Mammary epithelial cell (primary cell): ENCODE measurements at regions of chr17 and their contacts with region 1.

Region 1: GRCh38 chr17:45092932-45093430 is 31.9 kb downstream of the NMT1 start:
- DNase-seq: peak; percentile 92
- H3K4me3 ChIP-seq: no peak overlapping the region
- H3K27ac ChIP-seq: peak overlapping the region; percentile 47
- H3K4me1 ChIP-seq: peaks cover 19% of the 10 kb centered on the region
- H3K27me3 ChIP-seq: no peaks in the 10 kb centered on the region
- CTCF ChIP-seq: no peak

Region 2: DNA sequence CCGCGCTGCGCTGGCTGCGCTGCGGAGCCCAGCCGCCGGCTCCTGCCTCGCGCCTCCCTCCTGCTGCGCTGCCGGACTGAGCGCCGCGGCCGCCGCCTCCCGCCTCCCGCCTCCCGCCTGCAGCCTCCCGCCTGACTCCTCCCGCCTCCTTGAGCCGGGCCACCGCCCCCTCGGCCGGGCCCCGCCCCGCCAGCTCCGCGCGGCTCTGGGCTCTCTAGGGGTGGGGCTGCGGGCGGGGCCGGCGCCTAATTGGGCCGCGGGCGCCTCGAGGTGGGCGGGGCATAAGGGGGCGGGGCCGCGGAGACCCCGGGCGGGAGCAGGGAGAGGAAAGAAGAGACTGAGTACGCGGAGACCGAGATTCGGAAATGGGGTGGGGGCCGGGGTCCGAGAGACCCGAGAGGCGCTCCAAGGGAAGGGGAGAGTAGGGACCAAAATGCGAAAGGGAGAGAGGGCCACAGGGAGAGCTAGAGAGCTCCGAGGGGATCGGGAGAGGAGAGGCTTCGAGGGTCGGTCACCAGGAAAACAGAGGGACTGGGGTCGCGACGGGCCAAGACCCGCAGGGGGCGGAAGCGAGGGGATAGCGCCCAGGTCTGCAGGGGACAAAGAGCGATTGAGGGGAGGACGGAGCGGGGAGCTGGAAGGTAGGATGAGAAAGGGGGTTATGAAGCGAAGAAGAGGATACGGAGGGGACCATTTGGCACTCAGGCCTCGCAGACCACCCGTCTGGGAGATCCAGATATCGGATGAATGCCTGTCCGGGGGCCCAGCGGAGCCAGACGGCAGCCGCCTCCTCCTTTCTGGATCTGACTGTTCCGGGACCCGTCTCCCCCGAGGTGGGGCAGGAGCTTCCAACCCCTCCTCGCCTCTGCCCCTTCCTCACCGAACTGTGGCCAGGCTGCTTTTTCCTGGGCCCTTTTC is 124.5 kb before region 1 on chr17 and contains the start of gene C1QL1:
- CTCF ChIA-PET with region 1: no interaction called
- dilution Hi-C with region 1: no loop called
- in situ Hi-C with region 1: no loop called
- intact Hi-C with region 1: no loop called
- DNase-seq: peak; percentile 87
- H3K4me3 ChIP-seq: peak within 1 kb of the TSS; percentile 45 to 61 (median 49)
- H3K27ac ChIP-seq: no peak within 1 kb of the TSS
- H3K4me1 ChIP-seq: peaks cover 44% of the 10 kb centered on the region
- H3K27me3 ChIP-seq: peaks cover 14% of the 10 kb centered on the region
- CTCF ChIP-seq: peak in 1 of 2 donors; percentile 18
- total RNA-seq, gene C1QL1: 0.54 TPM in 1 of 2 donors, not detected in the other

Region 3: GRCh38 chr17:45060797-45061605 is 32.0 kb before region 1 on chr17 and contains the start of gene NMT1:
- CTCF ChIA-PET with region 1: no interaction called
- dilution Hi-C with region 1: no loop called
- in situ Hi-C with region 1: no loop called
- intact Hi-C with region 1: loop called (anchors 2 kb)
- DNase-seq: peak; percentile 99
- H3K4me3 ChIP-seq: peak within 1 kb of the TSS; percentile 84 to 100 (median 92)
- H3K27ac ChIP-seq: peak within 1 kb of the TSS; percentile 94
- H3K4me1 ChIP-seq: peaks cover 13% of the 10 kb centered on the region
- H3K27me3 ChIP-seq: no peaks in the 10 kb centered on the region
- CTCF ChIP-seq: no peak
- total RNA-seq, gene NMT1: 80.0 to 143 TPM

Region 4: GRCh38 chr17:45172454-45173286 is 79.7 kb after region 1 on chr17:
- CTCF ChIA-PET with region 1: no interaction called
- dilution Hi-C with region 1: no loop called
- in situ Hi-C with region 1: no loop called
- intact Hi-C with region 1: no loop called
- DNase-seq: peak; percentile 96
- H3K4me3 ChIP-seq: peak overlapping the region; percentile 40 to 58 (median 49)
- H3K27ac ChIP-seq: peak overlapping the region; percentile 99
- H3K4me1 ChIP-seq: peaks cover 55% of the 10 kb centered on the region
- H3K27me3 ChIP-seq: no peaks in the 10 kb centered on the region
- CTCF ChIP-seq: peak; percentile 13 to 46